ENCODE measurements at regions of chr11 and their contacts with region 1.

Region 1: GRCh38 chr11:87352759-87353707 is 315.3 kb downstream of the TMEM135 start:
- DNase-seq: peak; percentile 95
- H3K4me3 ChIP-seq: no peak overlapping the region
- H3K27ac ChIP-seq: peak overlapping the region in 4 of 8 donors; percentile 40 to 70 (median 52)
- H3K4me1 ChIP-seq: peaks cover 12 to 28% (median 18%) of the 10 kb centered on the region in 6 donors
- H3K27me3 ChIP-seq: peaks cover 0 to 10% (median 0%) of the 10 kb centered on the region in 7 donors
- CTCF ChIP-seq: peak; percentile 95 to 99 (median 98)
- POLR2A ChIP-seq: no peak

Region 2: DNA sequence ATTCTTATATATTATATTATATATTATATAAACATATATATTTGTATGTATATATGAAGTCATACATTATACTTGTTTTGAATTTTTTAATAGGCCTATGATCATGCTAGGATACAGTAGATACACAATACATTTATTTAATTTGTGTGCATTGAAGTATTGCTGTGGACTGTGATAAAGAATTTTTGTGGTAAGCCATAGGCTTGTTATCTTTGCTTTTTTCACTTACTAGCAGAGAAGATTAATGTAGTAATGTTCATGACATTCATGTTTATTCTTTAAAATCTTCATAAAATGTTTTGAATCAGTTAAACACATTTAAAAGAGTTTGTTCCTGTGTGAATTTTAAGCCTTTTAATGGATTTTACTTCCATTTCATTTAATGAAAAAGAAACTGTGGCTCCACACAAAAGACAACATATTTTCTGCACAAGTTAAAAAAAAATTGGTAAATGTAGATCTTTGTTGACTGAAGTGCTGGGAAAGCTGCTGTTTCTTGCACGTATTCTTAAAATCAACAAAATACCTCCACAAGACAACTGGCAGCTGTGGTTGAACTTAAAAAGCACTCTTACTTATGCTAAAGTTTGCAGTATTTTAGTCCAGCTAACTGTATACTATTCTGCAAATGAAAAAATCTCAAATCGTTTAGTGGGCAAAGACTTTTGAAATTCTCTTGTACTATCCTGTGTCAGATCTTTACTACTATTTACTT is 159.1 kb before region 1 on chr11:
- intact Hi-C with region 1: no loop called
- DNase-seq: no peak
- H3K4me3 ChIP-seq: no peak overlapping the region
- H3K27ac ChIP-seq: no peak overlapping the region
- H3K4me1 ChIP-seq: peaks cover 0 to 6% (median 0%) of the 10 kb centered on the region in 6 donors
- H3K27me3 ChIP-seq: no peaks in the 10 kb centered on the region
- CTCF ChIP-seq: no peak
- POLR2A ChIP-seq: no peak

Region 3: GRCh38 chr11:87252869-87253268 is 100.2 kb before region 1 on chr11:
- intact Hi-C with region 1: no loop called
- DNase-seq: no peak
- H3K4me3 ChIP-seq: no peak overlapping the region
- H3K27ac ChIP-seq: no peak overlapping the region
- H3K4me1 ChIP-seq: peaks cover 0 to 9% (median 0%) of the 10 kb centered on the region in 6 donors
- H3K27me3 ChIP-seq: no peaks in the 10 kb centered on the region
- CTCF ChIP-seq: no peak
- POLR2A ChIP-seq: no peak

Region 4: DNA sequence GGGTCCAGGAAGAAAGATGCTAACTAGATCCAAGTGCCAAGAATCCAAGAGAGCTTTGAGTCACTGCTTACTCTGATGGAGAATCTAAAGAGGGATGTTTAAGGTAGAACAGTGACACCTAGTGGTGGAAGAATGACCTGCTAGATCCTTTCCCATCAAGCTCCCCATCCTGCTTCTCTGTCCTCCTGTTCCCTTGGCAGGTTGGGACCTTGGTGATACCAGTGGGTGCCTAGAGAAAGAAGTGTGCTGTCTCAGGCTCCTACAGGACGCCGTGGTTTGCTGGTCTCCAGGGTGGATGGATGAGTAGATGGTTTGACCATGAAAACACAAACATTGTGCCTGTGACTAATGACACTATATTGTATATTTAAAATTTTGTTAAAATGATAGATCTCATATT is 68.4 kb after region 1 on chr11:
- intact Hi-C with region 1: loop called (anchors 2 kb)
- DNase-seq: no peak
- H3K4me3 ChIP-seq: no peak overlapping the region
- H3K27ac ChIP-seq: peak overlapping the region in 1 of 8 donors; percentile 21
- H3K4me1 ChIP-seq: peaks cover 0 to 11% (median 2%) of the 10 kb centered on the region in 6 donors
- H3K27me3 ChIP-seq: peaks cover 0 to 6% (median 0%) of the 10 kb centered on the region in 7 donors
- CTCF ChIP-seq: peak; percentile 53 to 83 (median 80)
- POLR2A ChIP-seq: no peak

Region 5: DNA sequence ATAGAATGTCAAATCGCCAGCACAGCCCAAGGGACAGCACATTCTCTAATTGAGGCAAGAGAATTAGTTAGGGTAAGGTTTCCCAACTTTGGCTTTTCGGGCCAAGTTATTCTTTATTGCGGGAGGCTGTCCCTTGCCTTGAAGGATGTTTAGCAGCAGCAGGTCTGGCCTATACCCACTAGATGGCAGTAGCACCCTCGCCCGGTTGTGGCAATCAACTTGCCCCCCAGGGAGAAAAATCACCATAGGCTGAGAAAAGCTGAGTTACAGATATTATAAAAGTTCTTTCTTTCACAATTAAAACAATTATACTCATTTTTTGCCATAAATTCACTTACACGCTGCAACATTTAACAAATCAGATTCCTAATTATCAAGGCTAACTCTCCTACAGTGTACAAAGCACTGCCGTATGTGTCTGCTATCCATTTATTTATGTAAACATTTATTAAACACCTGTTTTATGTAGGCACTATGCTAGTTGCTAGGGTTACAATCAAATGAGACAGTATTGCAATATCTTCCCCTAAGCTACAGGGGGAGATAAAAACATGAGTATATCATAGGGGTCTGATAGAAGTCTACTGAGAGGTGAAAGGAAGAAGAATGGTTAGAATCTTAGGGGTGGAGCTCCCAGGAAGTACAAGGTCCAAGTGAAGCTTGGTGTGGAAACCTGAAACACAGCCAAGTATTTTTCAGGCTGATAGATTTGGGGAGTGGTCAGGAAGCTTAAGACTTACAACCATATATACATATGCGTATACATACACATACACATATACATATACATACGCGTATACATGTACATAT is 369.9 kb after region 1 on chr11:
- intact Hi-C with region 1: loop called (anchors 10 kb)
- DNase-seq: no peak
- H3K4me3 ChIP-seq: no peak overlapping the region
- H3K27ac ChIP-seq: no peak overlapping the region
- H3K4me1 ChIP-seq: no peaks in the 10 kb centered on the region
- H3K27me3 ChIP-seq: no peaks in the 10 kb centered on the region
- CTCF ChIP-seq: peak in 9 of 11 experiments; percentile 16 to 60 (median 44)
- POLR2A ChIP-seq: no peak

Region 6: GRCh38 chr11:88543902-88544655 is 1191.0 kb after region 1 on chr11:
- intact Hi-C with region 1: loop called (anchors 10 kb)
- DNase-seq: peak; percentile 84
- H3K4me3 ChIP-seq: no peak overlapping the region
- H3K27ac ChIP-seq: no peak overlapping the region
- H3K4me1 ChIP-seq: peaks cover 0 to 7% (median 0%) of the 10 kb centered on the region in 6 donors
- H3K27me3 ChIP-seq: no peaks in the 10 kb centered on the region
- CTCF ChIP-seq: peak; percentile 66 to 93 (median 80)
- POLR2A ChIP-seq: no peak